Naive thymus-derived CD4-positive, alpha-beta T cell (primary cell): ENCODE measurements at regions of chr5 and their contacts with region 1.

Region 1: DNA sequence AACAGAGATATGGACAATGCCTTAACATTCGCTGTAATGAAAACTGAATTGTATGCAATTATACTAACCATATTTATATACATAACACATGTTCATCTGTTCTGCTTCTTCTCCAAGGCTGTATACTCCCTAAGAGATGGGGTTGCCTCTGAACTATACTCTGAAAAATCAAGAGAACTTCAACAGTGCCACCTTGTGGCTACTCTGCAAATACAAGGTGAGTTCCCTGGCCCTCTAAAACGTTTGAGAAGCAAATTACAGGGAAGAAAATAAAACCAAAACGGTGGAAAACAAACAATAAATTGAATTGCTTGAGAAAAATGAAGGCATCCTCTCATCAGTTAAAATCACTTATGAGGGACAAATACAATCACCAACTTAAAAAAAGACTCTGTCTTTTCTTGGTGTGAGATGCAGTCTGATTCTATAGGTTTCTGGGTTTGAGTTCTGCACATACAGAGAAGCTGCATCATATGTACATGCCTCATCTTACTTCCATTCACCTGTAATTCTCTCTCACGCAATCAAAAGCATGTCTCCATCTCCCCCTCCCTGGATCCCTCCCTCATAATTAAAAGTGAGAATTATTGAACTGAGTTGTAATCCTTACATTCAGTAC is 98.6 kb downstream of the FBXW11 start:
- DNase-seq: peak in 7 of 9 donors; percentile 9 to 55 (median 45)
- ATAC-seq: peak; percentile 88
- H3K4me3 ChIP-seq: no peak overlapping the region
- H3K4me3 Mint-ChIP-seq: no peak overlapping the region
- H3K27ac ChIP-seq: no peak overlapping the region
- H3K27ac Mint-ChIP-seq: peak overlapping the region in 3 of 9 donors; percentile 0 to 75 (median 50)
- H3K4me1 ChIP-seq: peaks cover 0 to 23% of the 10 kb centered on the region in 2 donors
- H3K4me1 Mint-ChIP-seq: peaks cover 25 to 54% (median 48%) of the 10 kb centered on the region in 7 donors
- H3K27me3 ChIP-seq: no peaks in the 10 kb centered on the region
- H3K27me3 Mint-ChIP-seq: no peaks in the 10 kb centered on the region

Region 2: GRCh38 chr5:170434966-170435605 is 1472.7 kb before region 1 on chr5:
- CTCF ChIA-PET with region 1: interaction called, 3 read pairs
- POLR2A ChIA-PET with region 1: no interaction called
- intact Hi-C with region 1: loop called in 1 of 2 experiments (anchors 5 kb)
- DNase-seq: peak; percentile 15 to 61 (median 40)
- ATAC-seq: peak; percentile 88
- H3K4me3 ChIP-seq: no peak overlapping the region
- H3K4me3 Mint-ChIP-seq: no peak overlapping the region
- H3K27ac ChIP-seq: no peak overlapping the region
- H3K27ac Mint-ChIP-seq: no peak overlapping the region
- H3K4me1 ChIP-seq: no peaks in the 10 kb centered on the region
- H3K4me1 Mint-ChIP-seq: no peaks in the 10 kb centered on the region
- H3K27me3 ChIP-seq: no peaks in the 10 kb centered on the region
- H3K27me3 Mint-ChIP-seq: peaks cover 0 to 6% (median 0%) of the 10 kb centered on the region in 5 donors

Region 3: DNA sequence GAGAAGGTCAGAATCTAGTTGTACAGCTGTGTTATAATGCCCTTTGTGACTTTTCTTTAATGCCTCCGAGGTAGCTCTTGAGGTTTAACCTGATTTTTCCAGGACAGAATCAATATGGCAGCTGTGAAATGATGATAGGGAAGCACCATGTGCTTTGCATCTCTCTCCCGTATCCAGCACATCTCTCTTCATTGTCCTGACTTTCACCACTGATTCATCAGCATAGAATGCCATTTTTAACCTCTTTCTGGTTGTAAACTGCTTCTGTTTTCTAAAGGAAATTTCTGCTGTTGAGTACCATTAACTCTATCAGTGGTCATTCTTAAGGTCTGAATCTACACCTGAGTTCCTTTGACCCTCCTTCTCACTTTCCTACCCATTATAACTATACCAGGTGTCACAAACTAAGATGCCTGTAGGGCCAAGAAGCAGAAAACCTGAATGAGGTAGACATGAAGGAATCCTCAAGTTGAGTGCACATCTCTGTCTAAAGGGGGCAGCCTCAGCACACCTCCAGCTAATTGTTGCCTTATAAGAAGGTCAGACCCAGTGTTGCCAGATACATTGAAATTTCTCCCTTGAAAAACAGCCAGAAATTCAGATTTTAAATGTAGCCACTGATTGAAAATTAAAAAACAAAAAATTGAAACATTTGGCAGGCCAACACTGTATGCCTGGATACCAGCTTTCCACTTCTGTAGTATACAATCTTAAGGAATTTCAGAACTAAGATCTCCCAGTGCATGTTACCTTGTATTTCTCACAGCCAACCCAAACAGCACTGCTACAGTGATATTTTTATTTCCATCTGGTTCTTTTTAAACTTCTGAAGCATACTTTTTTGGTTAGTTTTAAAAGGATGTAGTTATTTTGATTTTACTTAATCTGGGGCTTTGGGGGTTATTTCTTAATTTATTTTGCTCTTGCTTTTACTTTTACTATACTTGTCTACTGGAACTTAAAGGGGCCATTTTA is 634.6 kb before region 1 on chr5:
- CTCF ChIA-PET with region 1: interaction called, 3 read pairs
- POLR2A ChIA-PET with region 1: no interaction called
- intact Hi-C with region 1: loop called in 1 of 2 experiments (anchors 2 kb)
- DNase-seq: no peak
- ATAC-seq: no peak
- H3K4me3 ChIP-seq: no peak overlapping the region
- H3K4me3 Mint-ChIP-seq: no peak overlapping the region
- H3K27ac ChIP-seq: no peak overlapping the region
- H3K27ac Mint-ChIP-seq: no peak overlapping the region
- H3K4me1 ChIP-seq: no peaks in the 10 kb centered on the region
- H3K4me1 Mint-ChIP-seq: no peaks in the 10 kb centered on the region
- H3K27me3 ChIP-seq: no peaks in the 10 kb centered on the region
- H3K27me3 Mint-ChIP-seq: peaks cover 0 to 26% (median 9%) of the 10 kb centered on the region in 5 donors

Region 4: GRCh38 chr5:171484460-171484899 is 423.4 kb before region 1 on chr5:
- CTCF ChIA-PET with region 1: no interaction called
- POLR2A ChIA-PET with region 1: no interaction called
- intact Hi-C with region 1: loop called in 1 of 2 experiments (anchors 1 kb)
- DNase-seq: peak in 7 of 9 donors; percentile 2 to 42 (median 17)
- ATAC-seq: peak; percentile 69
- H3K4me3 ChIP-seq: no peak overlapping the region
- H3K4me3 Mint-ChIP-seq: no peak overlapping the region
- H3K27ac ChIP-seq: no peak overlapping the region
- H3K27ac Mint-ChIP-seq: peak overlapping the region in 1 of 9 donors; percentile 41
- H3K4me1 ChIP-seq: peaks cover 0 to 3% of the 10 kb centered on the region in 2 donors
- H3K4me1 Mint-ChIP-seq: peaks cover 0 to 8% (median 0%) of the 10 kb centered on the region in 7 donors
- H3K27me3 ChIP-seq: no peaks in the 10 kb centered on the region
- H3K27me3 Mint-ChIP-seq: peaks cover 3 to 15% (median 9%) of the 10 kb centered on the region in 5 donors

Region 5: DNA sequence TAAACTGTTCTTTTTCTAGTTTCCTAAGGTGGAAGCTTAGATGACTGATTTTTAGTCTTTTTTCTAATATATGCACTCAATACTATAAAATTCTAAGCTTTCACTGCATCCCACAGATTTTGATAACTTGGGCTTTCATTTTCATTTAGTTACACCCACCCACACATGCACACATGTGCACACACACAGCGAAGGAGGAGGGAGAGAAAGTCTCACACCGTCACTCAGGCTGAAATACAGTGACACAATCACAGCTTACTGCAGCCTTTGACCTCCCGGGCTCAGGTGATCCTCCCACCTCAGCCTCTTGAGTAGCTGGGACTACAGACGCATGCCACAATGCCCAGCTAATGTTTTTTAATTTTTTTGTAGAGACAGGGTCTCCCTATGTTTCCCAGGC is 25.7 kb before region 1 on chr5:
- CTCF ChIA-PET with region 1: no interaction called
- POLR2A ChIA-PET with region 1: no interaction called
- intact Hi-C with region 1: no loop called
- DNase-seq: no peak
- ATAC-seq: no peak
- H3K4me3 ChIP-seq: no peak overlapping the region
- H3K4me3 Mint-ChIP-seq: no peak overlapping the region
- H3K27ac ChIP-seq: no peak overlapping the region
- H3K27ac Mint-ChIP-seq: no peak overlapping the region
- H3K4me1 ChIP-seq: no peaks in the 10 kb centered on the region
- H3K4me1 Mint-ChIP-seq: peaks cover 0 to 11% (median 4%) of the 10 kb centered on the region in 7 donors
- H3K27me3 ChIP-seq: no peaks in the 10 kb centered on the region
- H3K27me3 Mint-ChIP-seq: no peaks in the 10 kb centered on the region

Region 6: GRCh38 chr5:172035039-172035438 is 127.2 kb after region 1 on chr5:
- CTCF ChIA-PET with region 1: interaction called, 19 read pairs
- POLR2A ChIA-PET with region 1: no interaction called
- intact Hi-C with region 1: loop called (anchors 1 kb)
- DNase-seq: no peak
- ATAC-seq: peak; percentile 27
- H3K4me3 ChIP-seq: no peak overlapping the region
- H3K4me3 Mint-ChIP-seq: peak overlapping the region in 1 of 10 donors; percentile 20
- H3K27ac ChIP-seq: no peak overlapping the region
- H3K27ac Mint-ChIP-seq: no peak overlapping the region
- H3K4me1 ChIP-seq: no peaks in the 10 kb centered on the region
- H3K4me1 Mint-ChIP-seq: peaks cover 0 to 16% (median 9%) of the 10 kb centered on the region in 7 donors
- H3K27me3 ChIP-seq: no peaks in the 10 kb centered on the region
- H3K27me3 Mint-ChIP-seq: no peaks in the 10 kb centered on the region

Region 7: GRCh38 chr5:172293054-172293744 is 385.4 kb after region 1 on chr5:
- CTCF ChIA-PET with region 1: interaction called, 13 read pairs
- POLR2A ChIA-PET with region 1: no interaction called
- intact Hi-C with region 1: loop called (anchors 1 kb)
- DNase-seq: peak; percentile 20 to 77 (median 67)
- ATAC-seq: peak; percentile 100
- H3K4me3 ChIP-seq: no peak overlapping the region
- H3K4me3 Mint-ChIP-seq: no peak overlapping the region
- H3K27ac ChIP-seq: no peak overlapping the region
- H3K27ac Mint-ChIP-seq: peak overlapping the region in 1 of 9 donors; percentile 43
- H3K4me1 ChIP-seq: no peaks in the 10 kb centered on the region
- H3K4me1 Mint-ChIP-seq: peaks cover 0 to 4% (median 2%) of the 10 kb centered on the region in 7 donors
- H3K27me3 ChIP-seq: no peaks in the 10 kb centered on the region
- H3K27me3 Mint-ChIP-seq: peaks cover 0 to 12% (median 0%) of the 10 kb centered on the region in 5 donors